Activated T-helper 2 cell treated with anti-CD3 and anti-CD28 coated beads, Interferon-gamma antibody, Interleukin-2, Interleukin-4, amounts not matched to agents 10 μg/mL and 5 μg/mL and 100 μg/mL, durations not matched to agents 14 hours and 24 hours and 36 hours (primary cell): ENCODE measurements at regions of chr6 and their contacts with region 1.

Region 1: DNA sequence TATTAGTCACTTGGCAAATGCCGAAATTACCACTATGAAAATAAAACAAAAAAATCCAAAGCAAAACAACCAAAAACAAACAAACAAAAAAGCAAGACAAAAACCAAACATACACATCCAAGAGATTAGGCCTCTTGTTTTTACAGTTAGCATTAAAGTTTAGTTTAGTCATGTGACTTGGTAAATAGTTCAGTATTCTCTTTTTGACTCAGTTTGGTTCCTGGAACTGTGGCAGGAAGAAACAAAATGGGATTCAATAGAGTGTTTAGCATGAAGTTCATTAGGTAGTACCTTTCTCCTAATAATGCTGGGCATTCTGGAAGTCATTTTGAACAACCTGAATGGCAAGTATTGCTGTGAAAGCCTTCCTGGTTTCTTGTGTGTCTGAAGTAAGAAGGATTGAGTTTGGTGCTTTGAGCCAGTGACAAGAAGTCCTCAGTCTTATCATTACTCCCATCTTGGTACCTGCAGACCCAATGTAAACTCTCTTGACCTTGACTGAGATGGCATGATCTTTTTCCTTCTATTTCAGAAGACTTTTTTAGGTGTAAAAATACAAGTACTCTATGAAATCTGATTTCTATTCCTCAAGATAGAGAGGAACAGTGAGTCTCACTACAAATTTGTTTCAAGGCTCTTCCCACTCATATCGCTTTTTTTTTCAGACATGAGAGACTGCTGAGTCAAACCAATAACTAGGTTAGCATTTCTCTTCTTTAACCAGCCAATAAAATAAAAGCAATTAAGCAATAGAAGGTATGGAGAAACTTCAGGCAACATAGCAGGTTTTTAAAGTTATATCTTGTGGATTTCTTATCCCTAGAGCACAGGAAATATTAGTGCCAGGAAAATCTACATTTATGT is 223.6 kb upstream of the PREP start:
- DNase-seq: no peak
- H3K4me3 Mint-ChIP-seq: peak overlapping the region; percentile 9
- H3K27ac Mint-ChIP-seq: peak overlapping the region; percentile 79
- H3K4me1 Mint-ChIP-seq: peaks cover 55% of the 10 kb centered on the region
- H3K27me3 Mint-ChIP-seq: peaks cover 5% of the 10 kb centered on the region

Region 2: DNA sequence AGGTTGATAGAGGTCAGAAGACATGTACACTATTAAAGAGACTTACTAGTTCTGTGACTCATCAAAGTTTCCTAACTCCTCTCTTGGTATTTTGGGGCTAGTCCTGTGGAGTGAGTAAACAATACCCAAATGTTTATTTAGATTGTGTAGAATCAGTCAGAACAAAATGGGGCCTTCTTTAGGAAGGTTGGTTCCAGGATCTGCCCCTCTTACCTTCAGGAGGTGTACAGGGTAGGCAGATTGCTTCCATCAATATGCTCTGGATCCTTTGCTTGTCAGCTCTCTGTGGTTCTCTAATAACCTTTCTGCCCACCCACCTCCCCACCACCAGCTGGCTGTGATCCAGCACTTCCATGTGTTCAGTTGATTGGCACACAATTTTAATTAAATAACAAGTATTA is 553.7 kb before region 1 on chr6:
- intact Hi-C with region 1: no loop called
- DNase-seq: no peak
- H3K4me3 Mint-ChIP-seq: no peak overlapping the region
- H3K27ac Mint-ChIP-seq: no peak overlapping the region
- H3K4me1 Mint-ChIP-seq: no peaks in the 10 kb centered on the region
- H3K27me3 Mint-ChIP-seq: peaks cover 30% of the 10 kb centered on the region

Region 3: GRCh38 chr6:105591053-105591452 is 35.5 kb before region 1 on chr6:
- intact Hi-C with region 1: loop called (anchors 2 kb)
- DNase-seq: no peak
- H3K4me3 Mint-ChIP-seq: no peak overlapping the region
- H3K27ac Mint-ChIP-seq: peak overlapping the region; percentile 48
- H3K4me1 Mint-ChIP-seq: peaks cover 62% of the 10 kb centered on the region
- H3K27me3 Mint-ChIP-seq: no peaks in the 10 kb centered on the region

Region 4: DNA sequence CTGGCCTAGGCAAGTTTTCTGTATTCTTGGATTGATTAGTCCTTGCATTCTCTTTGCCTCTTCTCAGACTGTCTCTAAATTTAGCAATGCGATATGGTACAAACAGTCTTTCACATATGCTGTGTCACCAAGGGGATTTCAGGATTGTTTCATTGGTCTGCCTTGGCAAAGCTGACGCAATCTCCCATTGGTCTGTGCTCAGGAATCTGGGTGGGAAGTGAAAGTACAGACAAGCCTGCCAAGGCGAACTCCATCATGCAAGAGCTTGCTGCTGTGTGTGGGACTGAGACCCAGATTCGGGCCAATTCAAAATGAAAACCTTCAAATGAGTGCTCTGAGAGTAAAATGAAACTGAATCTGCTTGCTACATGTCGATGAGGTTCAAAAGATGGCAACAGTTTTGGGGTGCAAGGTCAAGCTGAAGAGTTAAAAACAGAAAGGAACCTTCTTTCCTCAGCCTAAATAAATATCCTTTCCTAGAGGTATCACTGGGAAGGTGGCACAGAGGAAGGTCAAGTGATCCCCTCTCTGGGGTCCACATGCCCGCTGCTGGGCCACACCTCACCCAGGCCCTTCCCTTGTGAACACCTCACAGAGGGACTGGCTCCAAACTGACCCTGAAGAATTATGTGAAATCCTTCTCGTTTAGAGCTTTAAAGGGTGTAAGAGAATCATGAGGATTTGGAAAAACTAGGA is 24.8 kb before region 1 on chr6:
- intact Hi-C with region 1: loop called (anchors 2 kb)
- DNase-seq: peak; percentile 19
- H3K4me3 Mint-ChIP-seq: peak overlapping the region; percentile 34
- H3K27ac Mint-ChIP-seq: peak overlapping the region; percentile 69
- H3K4me1 Mint-ChIP-seq: peaks cover 28% of the 10 kb centered on the region
- H3K27me3 Mint-ChIP-seq: no peaks in the 10 kb centered on the region